Endothelial cell of umbilical vein (primary cell): ENCODE measurements at regions of chr6 and their contacts with region 1.

Region 1: GRCh38 chr6:97215157-97215769 is 67.8 kb downstream of the MMS22L start:
- DNase-seq: peak; percentile 71
- H3K4me3 ChIP-seq: no peak overlapping the region
- H3K27ac ChIP-seq: peak overlapping the region; percentile 11
- H3K4me1 ChIP-seq: no peaks in the 10 kb centered on the region
- H3K27me3 ChIP-seq: no peaks in the 10 kb centered on the region
- CTCF ChIP-seq: peak; percentile 46 to 55
- POLR2A ChIP-seq: no peak

Region 2: GRCh38 chr6:97195117-97195516 is 20.1 kb before region 1 on chr6:
- CTCF ChIA-PET with region 1: interaction called, 99 read pairs
- POLR2A ChIA-PET with region 1: no interaction called
- dilution Hi-C with region 1: no loop called
- intact Hi-C with region 1: no loop called
- DNase-seq: peak; percentile 28
- H3K4me3 ChIP-seq: no peak overlapping the region
- H3K27ac ChIP-seq: no peak overlapping the region
- H3K4me1 ChIP-seq: peaks cover 12% of the 10 kb centered on the region
- H3K27me3 ChIP-seq: no peaks in the 10 kb centered on the region
- CTCF ChIP-seq: no peak
- POLR2A ChIP-seq: no peak

Region 3: GRCh38 chr6:97240222-97240621 is 25.0 kb after region 1 on chr6:
- CTCF ChIA-PET with region 1: interaction called, 20 read pairs
- POLR2A ChIA-PET with region 1: no interaction called
- dilution Hi-C with region 1: no loop called
- intact Hi-C with region 1: no loop called
- DNase-seq: peak; percentile 90
- H3K4me3 ChIP-seq: no peak overlapping the region
- H3K27ac ChIP-seq: peak overlapping the region; percentile 83
- H3K4me1 ChIP-seq: peaks cover 10% of the 10 kb centered on the region
- H3K27me3 ChIP-seq: no peaks in the 10 kb centered on the region
- CTCF ChIP-seq: no peak
- POLR2A ChIP-seq: no peak

Region 4: DNA sequence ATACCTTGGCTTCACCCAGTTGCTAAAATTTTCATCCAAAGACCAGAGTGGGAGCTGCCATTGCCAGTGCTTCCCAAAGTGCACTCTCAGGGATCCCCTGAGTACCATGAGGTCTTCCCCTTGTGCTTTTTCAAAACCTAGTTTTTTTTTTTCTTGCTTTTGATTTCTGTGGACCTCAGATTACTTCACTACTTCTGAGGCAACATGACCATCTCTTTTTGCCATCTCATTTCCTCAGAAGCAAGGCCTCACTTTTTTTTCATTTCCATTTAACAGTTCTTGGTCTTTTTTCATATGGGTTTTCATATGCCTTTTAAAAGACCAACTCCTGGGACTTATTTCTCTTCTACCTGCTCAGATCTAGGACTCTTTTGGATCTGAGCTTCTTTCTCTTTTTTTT is 131.8 kb after region 1 on chr6:
- CTCF ChIA-PET with region 1: interaction called, 13 read pairs
- POLR2A ChIA-PET with region 1: no interaction called
- dilution Hi-C with region 1: no loop called
- intact Hi-C with region 1: no loop called
- DNase-seq: no peak
- H3K4me3 ChIP-seq: no peak overlapping the region
- H3K27ac ChIP-seq: no peak overlapping the region
- H3K4me1 ChIP-seq: no peaks in the 10 kb centered on the region
- H3K27me3 ChIP-seq: no peaks in the 10 kb centered on the region
- CTCF ChIP-seq: no peak
- POLR2A ChIP-seq: no peak

Region 5: DNA sequence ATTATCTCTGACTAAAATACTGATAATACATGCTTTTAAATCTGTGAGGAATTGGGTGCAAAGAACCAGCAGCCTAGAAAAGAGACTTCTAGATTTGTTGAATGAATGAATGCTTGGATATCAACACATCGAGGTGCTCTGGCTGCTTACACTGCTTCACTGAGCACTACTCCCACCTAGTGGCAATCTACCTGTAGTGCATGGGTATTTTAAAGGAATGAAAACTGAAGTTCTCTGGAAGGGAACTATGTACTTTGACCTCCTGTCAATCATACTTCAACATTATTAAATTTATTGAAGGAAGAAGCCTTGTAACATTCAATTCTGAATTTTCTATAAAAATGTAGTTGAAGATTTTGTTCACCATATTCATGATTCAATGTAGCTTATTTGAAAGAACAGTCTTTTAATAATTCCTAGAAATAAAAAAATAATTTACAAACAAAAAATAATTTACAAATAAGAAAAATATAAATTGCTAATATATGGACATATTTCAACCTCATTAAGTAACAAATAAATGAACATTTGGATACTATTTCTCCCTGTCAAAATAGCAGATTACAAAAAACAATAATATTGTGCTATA is 179.0 kb after region 1 on chr6:
- CTCF ChIA-PET with region 1: interaction called, 91 read pairs
- POLR2A ChIA-PET with region 1: no interaction called
- dilution Hi-C with region 1: no loop called
- intact Hi-C with region 1: loop called (anchors 1 kb)
- DNase-seq: peak; percentile 75
- H3K4me3 ChIP-seq: no peak overlapping the region
- H3K27ac ChIP-seq: no peak overlapping the region
- H3K4me1 ChIP-seq: no peaks in the 10 kb centered on the region
- H3K27me3 ChIP-seq: peaks cover 4 to 5% of the 10 kb centered on the region in 2 experiments
- CTCF ChIP-seq: peak; percentile 71 to 73
- POLR2A ChIP-seq: no peak

Region 6: DNA sequence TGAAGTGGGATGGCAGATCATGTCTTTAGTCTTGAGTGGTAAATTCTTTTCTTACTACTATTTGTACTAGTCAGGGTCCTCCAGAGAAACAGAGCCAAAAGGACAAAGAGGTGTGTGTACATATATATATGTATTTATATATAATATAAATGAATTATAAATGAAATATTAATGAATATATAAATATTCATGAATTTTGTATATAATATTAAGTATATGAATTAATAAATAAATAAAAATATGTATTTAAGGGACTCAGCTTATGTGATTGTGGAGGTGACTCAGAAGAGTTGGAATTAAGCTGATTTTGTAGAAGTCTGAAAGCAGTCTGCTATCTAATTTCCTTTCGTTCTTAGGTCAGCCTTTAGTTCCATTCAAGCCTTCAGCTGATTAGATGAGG is 333.1 kb after region 1 on chr6:
- CTCF ChIA-PET with region 1: no interaction called
- POLR2A ChIA-PET with region 1: no interaction called
- dilution Hi-C with region 1: no loop called
- intact Hi-C with region 1: no loop called
- DNase-seq: no peak
- H3K4me3 ChIP-seq: no peak overlapping the region
- H3K27ac ChIP-seq: no peak overlapping the region
- H3K4me1 ChIP-seq: no peaks in the 10 kb centered on the region
- H3K27me3 ChIP-seq: no peaks in the 10 kb centered on the region
- CTCF ChIP-seq: no peak
- POLR2A ChIP-seq: no peak

Region 7: GRCh38 chr6:99119109-99120031 is 1904.1 kb after region 1 on chr6:
- CTCF ChIA-PET with region 1: interaction called, 16 read pairs
- POLR2A ChIA-PET with region 1: no interaction called
- dilution Hi-C with region 1: no loop called
- intact Hi-C with region 1: no loop called
- DNase-seq: peak; percentile 54
- H3K4me3 ChIP-seq: no peak overlapping the region
- H3K27ac ChIP-seq: no peak overlapping the region
- H3K4me1 ChIP-seq: no peaks in the 10 kb centered on the region
- H3K27me3 ChIP-seq: peaks cover 0 to 2% of the 10 kb centered on the region in 2 experiments
- CTCF ChIP-seq: peak; percentile 44 to 49
- POLR2A ChIP-seq: no peak